Sigmoid colon (tissue), 7 donors: ENCODE measurements at regions of chr2 and their contacts with region 1.

Region 1: GRCh38 chr2:88875736-88876135 is 184.3 kb downstream of the RPIA start:
- DNase-seq: no peak
- H3K4me3 ChIP-seq: no peak overlapping the region
- H3K27ac ChIP-seq: no peak overlapping the region
- H3K4me1 ChIP-seq: peaks cover 0 to 4% (median 2%) of the 10 kb centered on the region in 4 donors
- H3K27me3 ChIP-seq: peaks cover 0 to 14% (median 0%) of the 10 kb centered on the region in 3 donors
- CTCF ChIP-seq: no peak
- EP300 ChIP-seq: no peak
- POLR2A ChIP-seq: no peak

Region 2: GRCh38 chr2:88747990-88748389 is 127.7 kb before region 1 on chr2:
- intact Hi-C with region 1: loop called (anchors 5 kb)
- DNase-seq: no peak
- H3K4me3 ChIP-seq: no peak overlapping the region
- H3K27ac ChIP-seq: no peak overlapping the region
- H3K4me1 ChIP-seq: no peaks in the 10 kb centered on the region
- H3K27me3 ChIP-seq: no peaks in the 10 kb centered on the region
- CTCF ChIP-seq: no peak
- EP300 ChIP-seq: no peak
- POLR2A ChIP-seq: no peak